ENCODE measurements at regions of chr20 and their contacts with region 1.

Region 1: GRCh38 chr20:53021934-53022333 is 49.8 kb downstream of the TSHZ2 start:
- DNase-seq: no peak
- H3K4me3 Mint-ChIP-seq: no peak overlapping the region
- H3K27ac Mint-ChIP-seq: peak overlapping the region; percentile 56
- H3K4me1 Mint-ChIP-seq: peaks cover 50% of the 10 kb centered on the region
- H3K27me3 Mint-ChIP-seq: no peaks in the 10 kb centered on the region

Region 2: GRCh38 chr20:53001498-53002301 is 20.2 kb before region 1 on chr20:
- intact Hi-C with region 1: loop called (anchors 2 kb)
- DNase-seq: no peak
- H3K4me3 Mint-ChIP-seq: peak overlapping the region; percentile 74
- H3K27ac Mint-ChIP-seq: peak overlapping the region; percentile 92
- H3K4me1 Mint-ChIP-seq: peaks cover 33% of the 10 kb centered on the region
- H3K27me3 Mint-ChIP-seq: no peaks in the 10 kb centered on the region